Posterior vena cava (tissue), 2 donors: ENCODE measurements at regions of chr7 and their contacts with region 1.

Region 1: GRCh38 chr7:101066141-101066832 is 19.0 kb upstream of the TRIM56 start:
- DNase-seq: peak; percentile 50

Region 2: GRCh38 chr7:100889761-100890634 is 176.3 kb before region 1 on chr7:
- intact Hi-C with region 1: loop called (anchors 5 kb)
- DNase-seq: peak; percentile 98

Region 3: GRCh38 chr7:100965723-100966541 is 100.4 kb before region 1 on chr7:
- intact Hi-C with region 1: loop called in 1 of 2 experiments (anchors 10 kb)
- DNase-seq: peak; percentile 92

Region 4: GRCh38 chr7:101177644-101178043 is 111.4 kb after region 1 on chr7:
- intact Hi-C with region 1: loop called in 1 of 2 experiments (anchors 1 kb)
- DNase-seq: no peak